ENCODE measurements at regions of chr6 and their contacts with region 1.

Region 1: DNA sequence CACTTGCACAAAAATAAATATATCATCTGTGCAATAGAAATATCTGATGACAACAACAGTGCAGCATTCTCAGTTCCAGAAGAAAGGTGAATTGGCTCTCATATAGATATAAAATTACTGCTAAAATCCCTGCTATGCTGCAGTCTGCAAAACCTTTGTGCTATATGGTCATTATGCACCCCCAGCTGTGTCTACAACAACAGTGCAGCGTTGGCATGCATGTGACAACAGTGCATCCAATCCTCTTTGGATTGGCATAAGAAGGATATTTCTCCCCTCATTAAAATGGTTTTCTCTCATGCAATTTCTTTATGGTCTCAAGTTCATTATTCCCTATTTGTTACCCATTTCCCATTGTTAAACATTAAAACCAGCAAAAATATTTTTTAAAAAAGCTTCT is 23.1 kb downstream of the OR2B6 start:
- DNase-seq: no peak
- ATAC-seq: no peak
- H3K4me3 ChIP-seq: no peak overlapping the region
- H3K27ac ChIP-seq: no peak overlapping the region
- H3K4me1 ChIP-seq: no peaks in the 10 kb centered on the region
- H3K27me3 ChIP-seq: 0 out of 2 replicates have a peak, but pooled peaks cover 6% of the 10 kb centered on the region
- CTCF ChIP-seq: no peak

Region 2: DNA sequence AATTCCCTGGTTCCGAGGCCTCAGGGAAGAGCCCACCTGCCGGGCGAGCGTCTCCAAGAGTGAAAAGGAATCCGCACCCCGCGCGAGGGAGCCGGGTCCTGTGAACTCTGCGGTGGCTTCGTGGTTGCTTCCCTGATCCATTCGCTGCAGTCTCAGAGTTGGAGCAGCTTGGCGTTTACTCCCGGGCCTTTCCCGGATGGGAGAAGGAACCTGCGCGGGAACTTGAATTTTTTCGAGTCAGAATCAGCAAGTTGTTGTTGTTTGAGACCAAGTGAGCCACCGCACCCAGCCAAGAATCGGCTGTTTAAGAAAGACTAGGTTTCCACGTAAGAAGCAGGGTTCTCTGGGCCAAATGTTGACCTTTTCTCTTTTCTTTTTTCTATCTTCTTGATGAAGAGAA is 719.7 kb before region 1 on chr6:
- CTCF ChIA-PET with region 1: no interaction called
- POLR2A ChIA-PET with region 1: no interaction called
- in situ Hi-C with region 1: no loop called
- intact Hi-C with region 1: no loop called
- DNase-seq: no peak
- ATAC-seq: no peak
- H3K4me3 ChIP-seq: no peak overlapping the region
- H3K27ac ChIP-seq: no peak overlapping the region
- H3K4me1 ChIP-seq: no peaks in the 10 kb centered on the region
- H3K27me3 ChIP-seq: no peaks in the 10 kb centered on the region; the same call in 1 of the 2 replicates
- CTCF ChIP-seq: no peak

Region 3: GRCh38 chr6:27931209-27931608 is 48.9 kb before region 1 on chr6:
- CTCF ChIA-PET with region 1: no interaction called
- POLR2A ChIA-PET with region 1: no interaction called
- in situ Hi-C with region 1: no loop called
- intact Hi-C with region 1: loop called (anchors 5 kb)
- DNase-seq: no peak
- ATAC-seq: no peak
- H3K4me3 ChIP-seq: no peak overlapping the region
- H3K27ac ChIP-seq: no peak overlapping the region
- H3K4me1 ChIP-seq: no peaks in the 10 kb centered on the region
- H3K27me3 ChIP-seq: no peaks in the 10 kb centered on the region
- CTCF ChIP-seq: no peak

Region 4: GRCh38 chr6:28005124-28005890 is 25.2 kb after region 1 on chr6:
- CTCF ChIA-PET with region 1: no interaction called
- POLR2A ChIA-PET with region 1: no interaction called
- in situ Hi-C with region 1: no loop called
- intact Hi-C with region 1: no loop called
- DNase-seq: no peak
- ATAC-seq: no peak
- H3K4me3 ChIP-seq: no peak overlapping the region
- H3K27ac ChIP-seq: no peak overlapping the region
- H3K4me1 ChIP-seq: no peaks in the 10 kb centered on the region
- H3K27me3 ChIP-seq: no peaks in the 10 kb centered on the region
- CTCF ChIP-seq: no peak

Measured in Panc1 (cell line).